Activated B cell treated with CpG ODN at 0.5 μM for 24 hours (primary cell): ENCODE measurements at regions of chr11 and their contacts with region 1.

Region 1: GRCh38 chr11:8566613-8567210 is 27.3 kb downstream of the STK33 start:
- DNase-seq: no peak
- ATAC-seq: peak; percentile 45
- H3K4me3 Mint-ChIP-seq: no peak overlapping the region
- H3K27ac Mint-ChIP-seq: no peak overlapping the region
- H3K4me1 Mint-ChIP-seq: no peaks in the 10 kb centered on the region
- H3K27me3 Mint-ChIP-seq: peaks cover 1% of the 10 kb centered on the region
- CTCF ChIP-seq: no peak

Region 2: GRCh38 chr11:8192016-8192895 is 374.5 kb before region 1 on chr11:
- CTCF ChIA-PET with region 1: interaction called, 24 read pairs
- POLR2A ChIA-PET with region 1: no interaction called
- intact Hi-C with region 1: loop called (anchors 1 kb)
- DNase-seq: peak; percentile 37
- ATAC-seq: peak; percentile 85
- H3K4me3 Mint-ChIP-seq: no peak overlapping the region
- H3K27ac Mint-ChIP-seq: no peak overlapping the region
- H3K4me1 Mint-ChIP-seq: peaks cover 8% of the 10 kb centered on the region
- H3K27me3 Mint-ChIP-seq: peaks cover 4% of the 10 kb centered on the region
- CTCF ChIP-seq: peak; percentile 42

Region 3: DNA sequence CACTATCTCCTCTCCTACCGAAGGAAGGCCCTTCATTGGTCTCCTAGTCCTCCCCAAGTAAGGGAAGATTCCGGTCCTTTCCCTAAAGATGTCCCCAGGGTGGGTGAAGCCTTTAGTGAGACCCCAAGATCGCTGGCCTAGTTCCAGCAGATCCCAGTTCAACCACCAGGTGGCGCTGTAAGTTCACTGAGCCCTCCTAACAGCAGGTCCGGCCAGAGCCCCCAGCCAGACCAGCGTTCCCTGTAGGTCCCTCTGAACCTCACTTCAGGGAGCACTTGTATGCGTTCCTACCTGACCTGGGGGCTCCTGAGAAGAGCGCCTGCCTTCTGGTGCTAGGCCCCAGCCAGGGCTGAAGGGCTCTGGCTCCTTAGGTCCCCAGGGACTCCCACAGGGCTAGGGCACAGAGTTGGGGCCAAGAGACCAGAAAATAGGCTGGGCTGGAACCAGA is 341.1 kb before region 1 on chr11:
- CTCF ChIA-PET with region 1: interaction called, 14 read pairs
- POLR2A ChIA-PET with region 1: no interaction called
- intact Hi-C with region 1: loop called (anchors 1 kb)
- DNase-seq: peak; percentile 67
- ATAC-seq: peak; percentile 79
- H3K4me3 Mint-ChIP-seq: no peak overlapping the region
- H3K27ac Mint-ChIP-seq: no peak overlapping the region
- H3K4me1 Mint-ChIP-seq: no peaks in the 10 kb centered on the region
- H3K27me3 Mint-ChIP-seq: peaks cover 3% of the 10 kb centered on the region
- CTCF ChIP-seq: no peak

Region 4: DNA sequence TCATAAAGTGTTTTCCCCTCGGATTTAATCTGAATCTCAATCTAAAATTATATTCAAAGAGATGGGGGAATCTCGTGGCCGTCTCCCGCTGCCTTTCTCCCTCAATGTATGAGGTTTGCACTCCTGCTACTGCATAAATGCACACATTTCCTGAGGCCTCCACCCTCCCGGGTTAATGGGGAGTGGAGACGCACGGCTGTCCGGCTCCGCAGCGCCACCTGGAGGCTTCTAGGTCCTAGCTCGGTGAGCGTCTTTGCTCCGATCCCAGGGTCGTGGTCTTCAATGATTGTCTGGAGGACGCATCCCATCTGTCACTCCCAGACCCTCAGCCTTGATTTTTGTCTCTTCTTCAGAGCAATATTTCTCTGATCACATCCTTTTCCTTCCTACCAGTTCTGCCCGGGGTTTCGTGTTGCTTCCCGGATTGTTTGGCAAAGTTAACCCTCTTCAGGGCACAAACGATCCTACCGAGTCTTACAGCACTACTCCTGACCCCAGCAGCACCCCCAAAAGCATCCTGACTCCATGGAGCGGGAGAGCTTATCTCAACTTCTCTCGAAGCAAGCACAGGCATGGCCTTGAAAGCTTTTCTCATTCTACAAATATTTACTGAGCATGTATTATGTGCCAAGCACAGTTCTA is 302.8 kb before region 1 on chr11 and contains the start of gene LMO1:
- CTCF ChIA-PET with region 1: interaction called, 8 read pairs
- POLR2A ChIA-PET with region 1: no interaction called
- intact Hi-C with region 1: loop called (anchors 1 kb)
- DNase-seq: peak; percentile 72
- ATAC-seq: peak; percentile 75
- H3K4me3 Mint-ChIP-seq: peak within 1 kb of the TSS; percentile 80
- H3K27ac Mint-ChIP-seq: no peak within 1 kb of the TSS
- H3K4me1 Mint-ChIP-seq: peaks cover 10% of the 10 kb centered on the region
- H3K27me3 Mint-ChIP-seq: peaks cover 61% of the 10 kb centered on the region
- CTCF ChIP-seq: no peak
- total RNA-seq, gene LMO1: not detected in 2 replicates

Region 5: GRCh38 chr11:8338138-8338537 is 228.6 kb before region 1 on chr11:
- CTCF ChIA-PET with region 1: no interaction called
- POLR2A ChIA-PET with region 1: no interaction called
- intact Hi-C with region 1: loop called (anchors 1 kb)
- DNase-seq: no peak
- ATAC-seq: no peak
- H3K4me3 Mint-ChIP-seq: no peak overlapping the region
- H3K27ac Mint-ChIP-seq: no peak overlapping the region
- H3K4me1 Mint-ChIP-seq: peaks cover 18% of the 10 kb centered on the region
- H3K27me3 Mint-ChIP-seq: no peaks in the 10 kb centered on the region
- CTCF ChIP-seq: no peak

Region 6: DNA sequence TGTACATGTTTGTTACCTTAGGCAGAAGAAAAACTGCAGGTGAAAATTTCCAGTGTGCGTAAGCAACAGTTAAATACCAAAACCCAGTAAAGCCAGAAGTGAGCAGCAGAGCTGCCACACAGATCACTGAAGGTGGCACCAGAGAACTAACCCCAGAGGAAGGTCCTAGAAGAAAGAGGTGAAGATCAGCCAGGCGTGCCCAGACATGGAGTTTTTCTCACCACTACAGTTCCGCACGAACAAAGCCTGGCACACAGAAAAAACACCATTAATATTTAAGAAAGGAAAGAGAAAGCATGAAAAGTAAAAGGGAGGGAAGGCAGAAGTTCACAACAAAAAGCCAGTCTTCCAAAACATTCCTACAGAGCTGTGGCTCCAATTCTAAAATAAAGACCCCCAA is 33.4 kb before region 1 on chr11:
- CTCF ChIA-PET with region 1: interaction called, 5 read pairs
- POLR2A ChIA-PET with region 1: no interaction called
- intact Hi-C with region 1: loop called (anchors 1 kb)
- DNase-seq: no peak
- ATAC-seq: peak; percentile 84
- H3K4me3 Mint-ChIP-seq: peak overlapping the region; percentile 76
- H3K27ac Mint-ChIP-seq: peak overlapping the region; percentile 90
- H3K4me1 Mint-ChIP-seq: peaks cover 52% of the 10 kb centered on the region
- H3K27me3 Mint-ChIP-seq: no peaks in the 10 kb centered on the region
- CTCF ChIP-seq: no peak